ENCODE measurements at regions of chr11 and their contacts with region 1.

Region 1: GRCh38 chr11:13183094-13183825 is 94.3 kb upstream of the BMAL1 start:
- DNase-seq: no peak
- H3K4me3 Mint-ChIP-seq: peak overlapping the region; percentile 29
- H3K27ac Mint-ChIP-seq: no peak overlapping the region
- H3K4me1 Mint-ChIP-seq: no peaks in the 10 kb centered on the region
- H3K27me3 Mint-ChIP-seq: no peaks in the 10 kb centered on the region
- CTCF ChIP-seq: peak; percentile 42

Region 2: GRCh38 chr11:13009921-13010748 is 173.1 kb before region 1 on chr11:
- CTCF ChIA-PET with region 1: no interaction called
- intact Hi-C with region 1: loop called (anchors 10 kb)
- DNase-seq: peak; percentile 51
- H3K4me3 Mint-ChIP-seq: peak overlapping the region; percentile 83
- H3K27ac Mint-ChIP-seq: peak overlapping the region; percentile 26
- H3K4me1 Mint-ChIP-seq: peaks cover 62% of the 10 kb centered on the region
- H3K27me3 Mint-ChIP-seq: no peaks in the 10 kb centered on the region
- CTCF ChIP-seq: no peak

Region 3: GRCh38 chr11:13152736-13153533 is 30.3 kb before region 1 on chr11:
- CTCF ChIA-PET with region 1: no interaction called
- intact Hi-C with region 1: loop called (anchors 2 kb)
- DNase-seq: no peak
- H3K4me3 Mint-ChIP-seq: no peak overlapping the region
- H3K27ac Mint-ChIP-seq: no peak overlapping the region
- H3K4me1 Mint-ChIP-seq: peaks cover 62% of the 10 kb centered on the region
- H3K27me3 Mint-ChIP-seq: no peaks in the 10 kb centered on the region
- CTCF ChIP-seq: no peak